CD4-positive, alpha-beta memory T cell (primary cell): ENCODE measurements at regions of chr19 and their contacts with region 1.

Region 1: DNA sequence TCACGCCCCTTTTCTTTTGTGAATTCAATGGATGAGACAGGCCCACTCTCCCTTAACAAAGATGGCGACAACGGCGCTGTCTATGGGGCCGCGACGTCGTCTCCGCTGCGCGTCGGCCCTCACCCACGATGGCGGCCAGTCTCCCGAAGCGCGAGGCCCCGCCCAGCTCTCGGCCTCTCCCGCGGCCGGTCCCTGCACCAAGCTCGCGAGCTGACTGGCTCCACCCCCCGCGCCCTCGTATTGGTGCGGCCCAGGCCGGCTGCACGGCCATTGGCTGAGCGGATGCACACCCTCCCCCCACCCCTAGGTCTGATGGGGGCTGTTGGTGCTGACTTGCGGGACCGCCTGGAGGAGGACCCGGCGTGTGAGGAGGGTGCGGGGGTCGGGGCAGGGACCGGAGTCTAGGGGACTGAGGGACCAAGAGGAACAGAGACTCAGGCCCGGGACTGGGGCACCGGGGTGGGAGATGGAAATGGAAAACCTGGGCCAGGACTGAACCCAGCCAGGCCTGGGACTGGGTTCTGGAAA is 4.8 kb downstream of the SPHK2 start:
- DNase-seq: peak; percentile 87 to 91 (median 90)
- H3K4me3 ChIP-seq: peak overlapping the region; percentile 13 to 33
- H3K4me3 Mint-ChIP-seq: peak overlapping the region; percentile 59 to 93 (median 84)
- H3K27ac ChIP-seq: peak overlapping the region; percentile 68
- H3K27ac Mint-ChIP-seq: peak overlapping the region; percentile 79 to 98 (median 96)
- H3K4me1 ChIP-seq: peaks cover 27% of the 10 kb centered on the region
- H3K4me1 Mint-ChIP-seq: peaks cover 22 to 54% (median 34%) of the 10 kb centered on the region in 4 donors
- H3K27me3 ChIP-seq: no peaks in the 10 kb centered on the region
- H3K27me3 Mint-ChIP-seq: no peaks in the 10 kb centered on the region

Region 2: GRCh38 chr19:48637170-48637947 is 13.2 kb after region 1 on chr19 and contains the start of gene DBP:
- CTCF ChIA-PET with region 1: interaction called, 5 read pairs
- POLR2A ChIA-PET with region 1: interaction called, 70 read pairs
- intact Hi-C with region 1: loop called (anchors 1 kb)
- DNase-seq: peak in 4 of 5 donors; percentile 99 to 100 (median 100)
- H3K4me3 ChIP-seq: peak within 1 kb of the TSS; percentile 52 to 88
- H3K4me3 Mint-ChIP-seq: peak within 1 kb of the TSS; percentile 89 to 100 (median 99)
- H3K27ac ChIP-seq: peak within 1 kb of the TSS; percentile 88
- H3K27ac Mint-ChIP-seq: peak within 1 kb of the TSS; percentile 93 to 100 (median 99)
- H3K4me1 ChIP-seq: peaks cover 46% of the 10 kb centered on the region
- H3K4me1 Mint-ChIP-seq: peaks cover 20 to 55% (median 40%) of the 10 kb centered on the region in 4 donors
- H3K27me3 ChIP-seq: no peaks in the 10 kb centered on the region
- H3K27me3 Mint-ChIP-seq: no peaks in the 10 kb centered on the region
- total RNA-seq, gene DBP: 62.6 to 69.5 TPM

Region 3: GRCh38 chr19:48780631-48781391 is 156.7 kb after region 1 on chr19:
- CTCF ChIA-PET with region 1: no interaction called
- POLR2A ChIA-PET with region 1: no interaction called
- intact Hi-C with region 1: no loop called
- DNase-seq: no peak
- H3K4me3 ChIP-seq: no peak overlapping the region
- H3K4me3 Mint-ChIP-seq: no peak overlapping the region
- H3K27ac ChIP-seq: no peak overlapping the region
- H3K27ac Mint-ChIP-seq: peak overlapping the region in 1 of 7 donors; percentile 51
- H3K4me1 ChIP-seq: no peaks in the 10 kb centered on the region
- H3K4me1 Mint-ChIP-seq: peaks cover 0 to 4% (median 3%) of the 10 kb centered on the region in 4 donors
- H3K27me3 ChIP-seq: no peaks in the 10 kb centered on the region
- H3K27me3 Mint-ChIP-seq: peaks cover 7 to 13% of the 10 kb centered on the region in 2 donors